ENCODE measurements at regions of chr15 and their contacts with region 1.

Region 1: GRCh38 chr15:78195735-78196201 is 38.6 kb downstream of the ACSBG1 start:
- DNase-seq: peak; percentile 37 to 76
- ATAC-seq: peak in 2 of 3 donors; percentile 80 to 81
- H3K4me3 ChIP-seq: no peak overlapping the region
- H3K4me3 Mint-ChIP-seq: no peak overlapping the region
- H3K27ac ChIP-seq: no peak overlapping the region
- H3K27ac Mint-ChIP-seq: no peak overlapping the region
- H3K4me1 ChIP-seq: no peaks in the 10 kb centered on the region
- H3K4me1 Mint-ChIP-seq: no peaks in the 10 kb centered on the region
- H3K27me3 ChIP-seq: no peaks in the 10 kb centered on the region
- H3K27me3 Mint-ChIP-seq: peaks cover 0 to 8% of the 10 kb centered on the region in 2 donors
- CTCF ChIP-seq: peak; percentile 68

Region 2: GRCh38 chr15:78000091-78000926 is 195.5 kb before region 1 on chr15:
- intact Hi-C with region 1: loop called (anchors 1 kb)
- DNase-seq: peak; percentile 66 to 88
- ATAC-seq: peak; percentile 93 to 100 (median 98)
- H3K4me3 ChIP-seq: no peak overlapping the region
- H3K4me3 Mint-ChIP-seq: no peak overlapping the region
- H3K27ac ChIP-seq: no peak overlapping the region
- H3K27ac Mint-ChIP-seq: peak overlapping the region in 1 of 2 donors; percentile 83
- H3K4me1 ChIP-seq: no peaks in the 10 kb centered on the region
- H3K4me1 Mint-ChIP-seq: peaks cover 6 to 12% of the 10 kb centered on the region in 2 donors
- H3K27me3 ChIP-seq: no peaks in the 10 kb centered on the region
- H3K27me3 Mint-ChIP-seq: no peaks in the 10 kb centered on the region
- CTCF ChIP-seq: peak; percentile 42

Region 3: GRCh38 chr15:78241007-78241406 is 45.2 kb after region 1 on chr15:
- intact Hi-C with region 1: no loop called
- DNase-seq: peak; percentile 75 to 87
- ATAC-seq: peak; percentile 83 to 97 (median 95)
- H3K4me3 ChIP-seq: no peak overlapping the region
- H3K4me3 Mint-ChIP-seq: no peak overlapping the region
- H3K27ac ChIP-seq: no peak overlapping the region
- H3K27ac Mint-ChIP-seq: no peak overlapping the region
- H3K4me1 ChIP-seq: no peaks in the 10 kb centered on the region
- H3K4me1 Mint-ChIP-seq: no peaks in the 10 kb centered on the region
- H3K27me3 ChIP-seq: no peaks in the 10 kb centered on the region
- H3K27me3 Mint-ChIP-seq: no peaks in the 10 kb centered on the region
- CTCF ChIP-seq: peak; percentile 80

Region 4: DNA sequence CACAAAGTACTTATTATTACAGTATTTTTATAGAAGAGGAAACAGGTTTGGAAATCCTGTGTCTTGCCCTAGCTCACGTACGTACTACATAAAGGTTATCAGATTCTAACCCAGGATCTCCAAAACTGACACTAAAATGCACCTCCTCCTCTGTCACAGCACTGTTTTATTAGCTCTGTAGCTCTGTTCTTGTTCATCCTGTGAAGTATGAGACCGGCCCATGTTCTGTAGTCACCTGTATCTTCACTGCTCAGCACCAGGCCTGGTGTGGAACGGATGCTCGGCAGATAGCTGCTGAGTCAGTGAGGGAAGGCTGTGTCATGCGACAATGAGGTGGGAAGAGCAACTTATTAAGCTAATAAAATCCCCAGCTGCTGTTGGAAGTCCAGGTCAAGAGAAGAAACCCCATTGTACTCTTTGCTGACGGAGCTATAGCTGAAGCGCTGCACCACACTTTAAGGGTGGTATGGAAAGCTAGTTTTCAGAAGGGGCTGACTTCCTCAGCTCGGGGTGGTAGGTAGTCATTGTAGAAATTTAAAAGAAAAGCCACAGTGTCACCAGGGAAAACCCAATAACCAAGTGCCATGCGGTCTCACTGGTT is 1752.4 kb after region 1 on chr15:
- intact Hi-C with region 1: no loop called
- DNase-seq: no peak
- ATAC-seq: no peak
- H3K4me3 ChIP-seq: no peak overlapping the region
- H3K4me3 Mint-ChIP-seq: no peak overlapping the region
- H3K27ac ChIP-seq: no peak overlapping the region
- H3K27ac Mint-ChIP-seq: no peak overlapping the region
- H3K4me1 ChIP-seq: no peaks in the 10 kb centered on the region
- H3K4me1 Mint-ChIP-seq: peaks cover 0 to 1% of the 10 kb centered on the region in 2 donors
- H3K27me3 ChIP-seq: no peaks in the 10 kb centered on the region
- H3K27me3 Mint-ChIP-seq: peaks cover 2 to 7% of the 10 kb centered on the region in 2 donors
- CTCF ChIP-seq: no peak